Heart left ventricle (tissue), 16 donors: ENCODE measurements at regions of chr19 and their contacts with region 1.

Region 1: GRCh38 chr19:11299946-11300810 is 4.2 kb downstream of the TSPAN16 start:
- DNase-seq: no peak
- ATAC-seq: no peak
- H3K4me3 ChIP-seq: no peak overlapping the region
- H3K27ac ChIP-seq: no peak overlapping the region
- H3K4me1 ChIP-seq: peaks cover 0 to 15% (median 0%) of the 10 kb centered on the region in 12 donors
- H3K27me3 ChIP-seq: no peaks in the 10 kb centered on the region
- CTCF ChIP-seq: no peak
- POLR2A ChIP-seq: no peak

Region 2: GRCh38 chr19:10952809-10953208 is 347.4 kb before region 1 on chr19:
- intact Hi-C with region 1: no loop called
- DNase-seq: no peak
- ATAC-seq: no peak
- H3K4me3 ChIP-seq: no peak overlapping the region
- H3K27ac ChIP-seq: no peak overlapping the region
- H3K4me1 ChIP-seq: no peaks in the 10 kb centered on the region
- H3K27me3 ChIP-seq: no peaks in the 10 kb centered on the region
- CTCF ChIP-seq: no peak
- POLR2A ChIP-seq: no peak

Region 3: GRCh38 chr19:11164879-11165406 is 135.2 kb before region 1 on chr19:
- intact Hi-C with region 1: no loop called
- DNase-seq: peak; percentile 78 to 90 (median 85)
- ATAC-seq: peak; percentile 43 to 82 (median 74)
- H3K4me3 ChIP-seq: peak overlapping the region in 6 of 12 donors; percentile 3 to 25 (median 13)
- H3K27ac ChIP-seq: peak overlapping the region; percentile 69 to 88 (median 82)
- H3K4me1 ChIP-seq: peaks cover 3 to 44% (median 36%) of the 10 kb centered on the region in 12 donors
- H3K27me3 ChIP-seq: no peaks in the 10 kb centered on the region
- CTCF ChIP-seq: no peak
- POLR2A ChIP-seq: no peak

Region 4: GRCh38 chr19:11339254-11340098 is 39.3 kb after region 1 on chr19 and contains the start of gene RAB3D:
- intact Hi-C with region 1: loop called in 3 of 10 experiments (anchors 5 kb)
- DNase-seq: peak; percentile 93 to 96 (median 95)
- ATAC-seq: peak; percentile 92 to 98 (median 97)
- H3K4me3 ChIP-seq: peak within 1 kb of the TSS; percentile 56 to 88 (median 77)
- H3K27ac ChIP-seq: peak within 1 kb of the TSS; percentile 41 to 85 (median 78)
- H3K4me1 ChIP-seq: peaks cover 0 to 39% (median 14%) of the 10 kb centered on the region in 12 donors
- H3K27me3 ChIP-seq: no peaks in the 10 kb centered on the region
- CTCF ChIP-seq: no peak
- POLR2A ChIP-seq: peak in 1 of 2 donors; percentile 56
- total RNA-seq, gene RAB3D: 5.4 to 15.1 (median 7.4) TPM